ENCODE measurements at regions of chr16 and their contacts with region 1.

Region 1: GRCh38 chr16:15572329-15573001 is 70.5 kb downstream of the MARF1 start:
- DNase-seq: no peak
- H3K4me3 Mint-ChIP-seq: no peak overlapping the region
- H3K27ac Mint-ChIP-seq: peak overlapping the region; percentile 85
- H3K4me1 Mint-ChIP-seq: peaks cover 23% of the 10 kb centered on the region
- H3K27me3 Mint-ChIP-seq: no peaks in the 10 kb centered on the region

Region 2: GRCh38 chr16:15482068-15482747 is 90.3 kb before region 1 on chr16:
- intact Hi-C with region 1: loop called (anchors 5 kb)
- DNase-seq: peak; percentile 72
- H3K4me3 Mint-ChIP-seq: peak overlapping the region; percentile 2
- H3K27ac Mint-ChIP-seq: peak overlapping the region; percentile 79
- H3K4me1 Mint-ChIP-seq: peaks cover 35% of the 10 kb centered on the region
- H3K27me3 Mint-ChIP-seq: no peaks in the 10 kb centered on the region

Region 3: DNA sequence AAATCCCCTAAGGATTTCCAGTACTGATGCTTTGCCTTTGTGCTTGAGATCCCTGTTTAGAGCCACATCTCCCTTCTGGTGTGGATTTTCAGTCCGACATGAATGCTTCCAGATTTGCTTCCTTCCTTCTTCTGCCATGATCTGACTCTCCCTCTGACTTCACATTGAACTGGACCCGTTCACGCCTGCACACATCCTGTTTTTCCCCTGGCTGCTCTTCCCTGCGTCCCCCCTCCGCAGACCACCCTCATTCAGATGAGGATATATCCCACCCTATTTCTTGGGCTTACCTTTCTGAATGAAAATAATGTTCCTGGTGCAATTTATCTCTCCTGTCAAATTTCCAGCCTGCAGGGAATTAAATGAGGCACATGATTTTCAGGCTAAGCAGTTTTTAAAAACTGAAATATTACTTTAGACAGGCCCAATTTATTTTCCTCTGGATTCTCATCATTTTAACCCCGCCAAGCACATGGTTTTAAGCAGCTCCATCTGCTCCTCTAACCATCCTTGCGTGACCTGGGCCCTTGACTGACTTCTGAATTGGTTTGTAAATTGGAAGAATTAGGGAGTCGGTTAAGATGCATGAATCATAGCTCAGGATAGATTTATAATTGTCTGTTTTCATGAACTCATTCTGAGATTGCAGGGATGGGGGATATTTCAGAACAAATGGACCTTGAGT is 78.9 kb before region 1 on chr16:
- intact Hi-C with region 1: no loop called
- DNase-seq: no peak
- H3K4me3 Mint-ChIP-seq: no peak overlapping the region
- H3K27ac Mint-ChIP-seq: peak overlapping the region; percentile 52
- H3K4me1 Mint-ChIP-seq: peaks cover 47% of the 10 kb centered on the region
- H3K27me3 Mint-ChIP-seq: no peaks in the 10 kb centered on the region

Region 4: DNA sequence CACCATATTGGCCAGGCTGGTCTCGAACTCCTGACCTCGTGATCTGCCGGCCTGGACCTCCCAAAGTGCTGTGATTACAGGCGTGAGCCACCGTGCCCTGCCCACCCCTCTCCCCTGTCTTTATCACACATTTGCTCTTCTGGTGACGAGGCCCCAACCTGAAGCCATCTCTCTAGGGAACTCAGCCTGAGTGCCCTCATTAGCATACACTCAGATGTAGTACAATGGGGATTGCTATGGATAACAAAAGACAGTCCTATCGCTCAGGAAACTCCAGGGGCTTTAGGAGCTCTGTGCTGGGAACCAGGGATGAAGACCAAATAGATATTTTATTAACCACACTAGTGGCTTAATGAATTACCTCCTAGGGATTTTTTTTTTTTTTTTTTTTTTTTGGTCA is 30.2 kb before region 1 on chr16:
- intact Hi-C with region 1: no loop called
- DNase-seq: no peak
- H3K4me3 Mint-ChIP-seq: no peak overlapping the region
- H3K27ac Mint-ChIP-seq: no peak overlapping the region
- H3K4me1 Mint-ChIP-seq: peaks cover 4% of the 10 kb centered on the region
- H3K27me3 Mint-ChIP-seq: no peaks in the 10 kb centered on the region

Region 5: DNA sequence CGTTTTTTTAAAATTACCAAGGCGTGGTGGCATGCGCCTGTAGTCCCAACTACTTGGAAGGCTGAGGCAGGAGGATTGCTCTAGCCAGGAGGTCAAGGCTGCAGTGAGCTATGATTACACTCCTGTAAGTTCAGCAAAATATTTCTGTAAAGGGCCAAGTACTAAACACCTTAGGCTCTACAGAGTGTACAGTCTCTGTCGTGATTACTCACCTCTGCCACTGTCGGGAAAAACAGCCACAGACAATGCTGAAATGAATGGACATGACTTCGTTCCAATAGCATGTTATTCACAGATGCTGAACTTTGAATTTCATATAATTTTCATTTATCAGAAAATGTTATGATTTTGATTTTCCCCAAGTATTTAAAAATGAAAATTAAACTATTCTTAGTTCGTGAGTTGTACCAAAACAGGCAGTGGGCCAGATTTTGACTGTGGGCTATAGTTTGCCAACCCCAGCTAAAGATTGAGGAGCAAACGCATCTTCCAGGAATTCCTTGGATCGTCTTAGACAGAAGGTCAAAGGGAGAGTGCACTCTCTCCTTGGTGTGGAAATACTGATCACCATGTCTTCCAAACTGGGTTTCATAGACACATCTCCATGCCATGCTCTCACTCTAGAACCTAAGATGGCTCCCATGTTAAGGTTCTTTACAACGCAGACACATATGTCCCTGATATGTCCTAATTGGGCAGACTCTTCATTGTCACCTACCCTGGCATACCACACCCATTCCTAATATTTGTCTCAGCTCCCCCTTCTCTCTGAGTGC is 19.0 kb before region 1 on chr16:
- intact Hi-C with region 1: loop called (anchors 2 kb)
- DNase-seq: no peak
- H3K4me3 Mint-ChIP-seq: no peak overlapping the region
- H3K27ac Mint-ChIP-seq: no peak overlapping the region
- H3K4me1 Mint-ChIP-seq: peaks cover 14% of the 10 kb centered on the region
- H3K27me3 Mint-ChIP-seq: no peaks in the 10 kb centered on the region

Region 6: GRCh38 chr16:15672514-15673167 is 100.2 kb after region 1 on chr16:
- intact Hi-C with region 1: no loop called
- DNase-seq: peak; percentile 96
- H3K4me3 Mint-ChIP-seq: peak overlapping the region; percentile 66
- H3K27ac Mint-ChIP-seq: peak overlapping the region; percentile 90
- H3K4me1 Mint-ChIP-seq: peaks cover 47% of the 10 kb centered on the region
- H3K27me3 Mint-ChIP-seq: no peaks in the 10 kb centered on the region

Region 7: DNA sequence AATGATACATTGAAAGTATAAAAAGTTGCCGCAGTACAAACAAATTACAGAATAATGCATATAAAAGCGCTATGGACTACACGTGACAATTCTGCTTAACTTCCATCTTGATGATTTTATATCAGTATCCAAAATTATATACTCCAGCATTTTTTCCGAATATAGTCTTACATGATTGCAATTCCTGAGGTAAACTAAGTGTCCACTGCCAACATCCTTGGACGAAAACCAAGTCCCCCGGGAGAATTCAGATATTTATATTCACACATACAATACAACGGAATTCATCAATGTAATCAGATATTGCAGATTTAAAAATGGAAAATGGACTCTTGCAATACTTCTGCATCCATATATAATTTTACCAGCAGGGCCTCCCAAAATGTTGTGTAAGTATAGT is 293.3 kb after region 1 on chr16:
- intact Hi-C with region 1: no loop called
- DNase-seq: no peak
- H3K4me3 Mint-ChIP-seq: no peak overlapping the region
- H3K27ac Mint-ChIP-seq: no peak overlapping the region
- H3K4me1 Mint-ChIP-seq: no peaks in the 10 kb centered on the region
- H3K27me3 Mint-ChIP-seq: peaks cover 4% of the 10 kb centered on the region

Measured in activated CD4-positive, alpha-beta T cell treated with anti-CD3 and anti-CD28 coated beads, Interleukin-2, amount 10 ng/mL, durations not matched to agents 24 days and 14 days (primary cell).